PC-9 (cell line): ENCODE measurements at regions of chr2 and their contacts with region 1.

Region 1: DNA sequence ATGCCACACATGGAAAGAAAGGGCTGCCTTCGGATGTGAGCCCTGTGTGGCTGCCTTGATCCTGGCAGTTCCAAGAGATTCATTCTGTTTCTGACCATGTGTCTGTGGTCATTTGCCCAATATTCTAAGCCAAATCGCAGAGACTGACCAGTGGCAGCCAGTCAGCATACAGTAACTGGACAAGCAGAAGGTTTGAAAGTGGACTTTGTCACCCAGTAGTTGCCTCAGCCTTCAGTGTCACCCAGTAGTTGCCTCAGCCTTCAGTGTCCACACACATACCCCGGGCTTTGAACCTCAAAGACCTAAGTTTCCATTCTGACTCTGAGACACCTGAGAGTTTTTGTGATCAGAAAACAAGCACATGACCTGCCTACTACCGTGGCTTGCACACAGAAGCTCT is 5.0 kb downstream of the RFX8 start:
- DNase-seq: no peak
- H3K4me3 ChIP-seq: no peak overlapping the region
- H3K27ac ChIP-seq: no peak overlapping the region
- H3K4me1 ChIP-seq: no peaks in the 10 kb centered on the region
- H3K27me3 ChIP-seq: no peaks in the 10 kb centered on the region
- CTCF ChIP-seq: no peak

Region 2: DNA sequence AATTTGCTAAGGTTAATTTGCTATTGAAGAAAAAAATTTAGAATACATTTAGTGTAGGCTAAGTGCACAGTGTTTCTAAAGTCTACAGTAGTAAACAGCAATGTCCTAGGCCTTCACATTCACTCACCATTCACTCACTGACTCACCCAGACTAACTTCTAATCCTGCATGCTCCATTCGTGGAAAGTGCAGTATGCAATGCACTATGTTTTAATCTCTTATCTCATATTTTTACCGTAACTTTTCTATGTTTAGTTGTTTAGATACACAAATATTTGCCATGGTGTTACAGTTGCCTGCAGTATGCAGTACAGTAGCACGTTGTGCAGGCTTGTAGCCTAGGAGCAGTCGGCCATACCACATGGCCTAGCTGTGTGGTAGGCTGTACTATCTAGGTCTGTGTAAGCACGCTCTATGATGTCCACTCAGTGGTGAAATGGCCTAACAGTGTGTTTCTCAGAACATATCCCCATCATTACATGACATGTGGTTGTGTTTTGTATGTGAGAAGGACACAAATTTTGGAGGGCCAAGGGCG is 23.1 kb after region 1 on chr2:
- CTCF ChIA-PET with region 1: no interaction called
- POLR2A ChIA-PET with region 1: interaction called, 26 read pairs
- intact Hi-C with region 1: no loop called
- DNase-seq: no peak
- H3K4me3 ChIP-seq: no peak overlapping the region
- H3K27ac ChIP-seq: no peak overlapping the region
- H3K4me1 ChIP-seq: no peaks in the 10 kb centered on the region
- H3K27me3 ChIP-seq: no peaks in the 10 kb centered on the region
- CTCF ChIP-seq: no peak

Region 3: DNA sequence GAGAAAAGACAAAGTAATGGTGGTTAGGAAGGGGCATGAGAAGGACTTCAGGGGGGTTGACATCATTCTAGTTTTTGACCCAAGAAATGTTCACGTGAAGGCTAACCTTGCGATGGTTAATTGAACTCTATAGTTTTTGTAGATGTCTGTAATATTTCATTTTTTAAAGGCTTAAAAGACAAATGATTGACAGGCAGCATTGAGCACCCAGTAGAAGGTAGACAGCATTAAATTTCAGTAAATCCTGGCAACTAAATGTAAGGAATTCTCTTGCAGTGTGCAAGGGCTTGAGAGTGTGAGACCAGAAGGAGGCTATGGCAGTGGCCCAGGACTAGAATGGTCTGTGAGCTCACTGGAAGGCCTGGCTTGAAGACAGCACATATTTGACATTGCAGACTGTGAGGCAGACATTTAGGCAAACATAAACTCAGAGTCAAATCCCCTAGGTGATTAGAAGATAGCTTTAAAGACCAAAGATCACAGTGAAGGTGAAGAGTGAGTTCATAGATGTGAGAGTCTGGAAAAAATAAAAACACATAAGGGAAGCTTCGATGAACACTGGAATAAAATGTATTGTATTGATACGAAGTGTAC is 127.6 kb after region 1 on chr2:
- CTCF ChIA-PET with region 1: no interaction called
- POLR2A ChIA-PET with region 1: no interaction called
- intact Hi-C with region 1: no loop called
- DNase-seq: no peak
- H3K4me3 ChIP-seq: no peak overlapping the region
- H3K27ac ChIP-seq: no peak overlapping the region
- H3K4me1 ChIP-seq: no peaks in the 10 kb centered on the region
- H3K27me3 ChIP-seq: no peaks in the 10 kb centered on the region
- CTCF ChIP-seq: no peak